GM12878 (cell line): ENCODE measurements at regions of chr2 and their contacts with region 1.

Region 1: DNA sequence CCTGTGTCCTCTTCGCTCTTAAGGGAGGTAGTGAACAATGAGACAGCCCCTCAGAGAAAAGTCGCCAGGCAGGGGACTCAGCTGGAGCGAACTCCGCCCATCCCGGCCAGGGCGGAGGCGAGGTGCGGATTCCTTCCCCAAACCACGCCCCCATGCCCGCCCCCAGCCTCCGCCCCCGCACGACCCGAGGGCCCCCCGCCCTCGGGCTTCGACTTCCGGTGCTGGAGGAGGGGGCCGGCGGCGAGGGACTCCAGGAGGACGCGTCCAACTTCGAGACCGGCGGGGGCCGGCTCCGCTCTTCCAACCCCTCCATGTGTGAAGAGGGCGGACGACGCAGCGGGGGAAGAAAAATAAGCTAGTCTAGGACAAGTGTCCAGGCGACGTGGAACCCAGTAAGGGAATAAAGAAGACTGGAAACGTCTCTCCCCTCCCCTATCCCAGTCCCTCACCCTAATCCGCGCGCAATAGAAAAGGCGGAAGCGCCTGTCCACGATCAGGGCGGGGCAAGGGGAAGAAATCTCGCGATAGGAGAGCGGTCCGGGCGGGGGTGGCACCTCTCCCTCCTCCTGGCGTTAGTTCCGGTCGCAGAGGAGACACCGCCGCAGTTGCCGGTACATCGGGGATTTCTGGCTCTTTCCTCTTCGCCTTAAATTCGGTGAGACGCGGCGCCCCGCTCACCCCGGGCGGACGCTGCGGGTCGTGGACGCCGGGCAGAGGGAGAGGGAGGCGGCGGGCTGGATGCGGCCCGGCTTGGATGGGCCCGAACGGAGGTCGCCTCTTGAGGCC is at the start of gene BZW1:
- DNase-seq: peak; percentile 88
- ATAC-seq: peak; percentile 86
- H3K4me3 ChIP-seq: peak within 1 kb of the TSS; percentile 88
- H3K27ac ChIP-seq: peak within 1 kb of the TSS; percentile 100
- H3K4me1 ChIP-seq: peaks cover 19% of the 10 kb centered on the region
- H3K27me3 ChIP-seq: no peaks in the 10 kb centered on the region
- CTCF ChIP-seq: no peak
- EP300 ChIP-seq: 0 out of 4 replicates have a peak, but pooled peaks of 1 of the 2 experiments have one; percentile 5
- POLR2A ChIP-seq: peak; percentile 90
- RAD21 ChIP-seq: no peak
- polyA plus RNA-seq, gene BZW1: 200 to 317 TPM

Region 2: DNA sequence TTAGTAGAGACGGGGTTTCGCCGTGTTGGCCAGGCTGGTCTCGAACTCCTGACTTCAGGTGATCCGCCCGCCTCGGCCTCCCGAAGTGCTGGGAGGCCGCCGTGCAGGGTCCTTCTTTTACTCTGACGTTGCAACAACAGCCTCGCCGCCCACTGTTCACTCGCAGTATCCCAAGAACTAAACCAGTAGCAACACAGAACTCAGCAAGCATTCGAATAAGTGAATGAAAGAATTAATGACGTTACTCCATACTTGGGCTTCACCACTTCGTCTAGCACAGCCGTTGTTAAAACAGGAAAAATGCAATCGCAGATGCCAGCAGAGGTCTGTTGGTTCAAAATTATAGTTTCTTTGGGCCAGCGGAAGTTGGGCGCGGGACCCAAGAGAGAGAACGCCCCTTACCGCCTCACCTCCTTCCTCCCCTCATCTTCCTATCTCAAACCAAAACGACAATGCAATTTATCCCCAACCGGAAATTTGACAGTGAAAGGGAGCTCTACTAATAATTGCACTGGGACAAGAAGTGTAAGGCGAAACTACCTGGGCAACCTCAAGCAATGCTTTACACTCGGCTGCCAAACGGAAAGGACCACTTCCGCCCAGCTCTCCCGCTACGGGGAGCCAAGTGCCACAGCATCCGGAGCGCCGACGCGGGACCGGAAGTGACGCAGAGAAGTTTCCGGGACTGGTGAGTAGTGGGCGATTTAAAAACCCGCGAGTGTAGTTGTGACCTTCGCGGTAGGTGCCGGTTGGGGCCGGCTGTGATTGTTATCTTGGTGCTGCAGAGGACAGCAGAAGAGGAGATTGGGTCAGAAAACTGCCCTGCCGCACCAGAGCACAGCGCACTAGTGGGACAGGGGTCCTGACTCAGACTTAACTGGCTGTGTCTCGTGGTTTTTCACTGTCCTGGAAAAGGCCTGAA is 77.4 kb after region 1 on chr2 and contains the starts of genes NIF3L1 and PPIL3:
- CTCF ChIA-PET with region 1: no interaction called
- POLR2A ChIA-PET with region 1: interaction called, 5 read pairs
- RAD21 ChIA-PET with region 1: interaction called, 3 read pairs
- SMC1A ChIA-PET with region 1: no interaction called
- in situ Hi-C with region 1: no loop called
- intact Hi-C with region 1: loop called (anchors 2 kb)
- DNase-seq: peak; percentile 97
- ATAC-seq: peak; percentile 92
- H3K4me3 ChIP-seq: peak within 1 kb of the TSS; percentile 84
- H3K27ac ChIP-seq: peak within 1 kb of the TSS; percentile 85
- H3K4me1 ChIP-seq: peaks cover 11% of the 10 kb centered on the region
- H3K27me3 ChIP-seq: no peaks in the 10 kb centered on the region
- CTCF ChIP-seq: no peak
- EP300 ChIP-seq: peak in 1 of 2 experiments; percentile 64; a peak in 2 of 4 replicates
- POLR2A ChIP-seq: peak; percentile 82
- RAD21 ChIP-seq: no peak
- polyA plus RNA-seq, gene NIF3L1: 58.3 to 88.2 TPM
- polyA plus RNA-seq, gene PPIL3: 71.2 to 103 TPM